Caco-2 (cell line): ENCODE measurements at regions of chr11 and their contacts with region 1.

Region 1: DNA sequence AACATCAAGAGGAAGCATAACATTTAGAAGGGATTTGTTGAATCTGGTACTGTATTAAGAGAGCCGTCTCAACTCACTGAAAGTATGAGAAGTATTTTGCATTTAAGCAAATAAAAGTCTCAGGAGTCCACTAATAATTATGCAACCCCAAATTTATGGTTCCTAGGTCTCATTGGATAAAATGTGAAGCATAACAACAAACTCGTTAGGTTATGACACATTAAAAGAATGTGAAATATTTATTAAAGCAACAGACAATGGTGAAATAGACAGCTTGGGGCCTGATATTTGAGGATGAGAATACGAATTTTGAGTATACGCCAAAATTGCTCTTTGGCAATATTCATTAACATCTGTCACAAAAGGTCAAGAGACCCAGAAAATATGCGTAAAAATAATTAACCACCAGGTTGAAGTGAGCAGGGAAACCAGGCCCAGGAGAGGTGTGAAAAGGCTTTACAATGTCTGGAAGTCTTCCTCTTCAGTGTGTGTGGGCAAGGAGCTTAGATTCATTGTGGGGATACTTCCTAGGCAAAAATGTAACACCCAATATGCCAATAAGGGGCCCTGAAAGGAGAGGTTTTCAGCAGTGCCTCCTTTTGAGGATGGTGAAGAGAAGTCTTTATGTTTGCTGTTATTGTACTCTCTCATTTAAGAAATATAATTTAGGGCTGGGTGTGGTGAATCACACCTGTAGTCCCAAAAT is 89.2 kb downstream of the FDX1 start:
- DNase-seq: no peak
- H3K4me3 ChIP-seq: no peak overlapping the region
- H3K4me3 Mint-ChIP-seq: no peak overlapping the region
- H3K27ac Mint-ChIP-seq: no peak overlapping the region
- H3K4me1 ChIP-seq: no peaks in the 10 kb centered on the region
- H3K4me1 Mint-ChIP-seq: no peaks in the 10 kb centered on the region
- H3K27me3 ChIP-seq: no peaks in the 10 kb centered on the region
- H3K27me3 Mint-ChIP-seq: peaks cover 11% of the 10 kb centered on the region
- CTCF ChIP-seq: no peak

Region 2: DNA sequence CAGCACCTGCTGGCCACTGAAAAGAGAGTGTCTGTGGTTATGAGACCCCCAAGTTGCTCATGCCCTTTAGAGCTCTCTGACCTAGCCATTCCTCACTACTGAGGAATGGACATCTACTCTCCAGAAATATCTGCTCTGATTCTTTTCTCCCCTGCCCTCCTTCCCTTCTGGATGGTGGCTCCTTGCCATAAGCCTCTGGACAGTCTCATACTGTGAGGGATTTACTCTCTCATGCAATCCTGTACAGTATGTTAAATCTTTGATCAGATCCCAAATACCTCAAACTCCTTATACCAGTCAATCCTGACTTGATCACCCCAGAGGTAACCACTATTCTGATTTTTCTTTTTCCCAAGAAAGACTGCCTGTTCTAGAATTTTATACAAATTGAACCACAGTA is 112.6 kb after region 1 on chr11:
- CTCF ChIA-PET with region 1: no interaction called
- POLR2A ChIA-PET with region 1: no interaction called
- intact Hi-C with region 1: loop called (anchors 5 kb)
- DNase-seq: no peak
- H3K4me3 ChIP-seq: no peak overlapping the region
- H3K4me3 Mint-ChIP-seq: no peak overlapping the region
- H3K27ac Mint-ChIP-seq: no peak overlapping the region
- H3K4me1 ChIP-seq: no peaks in the 10 kb centered on the region
- H3K4me1 Mint-ChIP-seq: no peaks in the 10 kb centered on the region
- H3K27me3 ChIP-seq: no peaks in the 10 kb centered on the region
- H3K27me3 Mint-ChIP-seq: peaks cover 9% of the 10 kb centered on the region
- CTCF ChIP-seq: no peak

Region 3: DNA sequence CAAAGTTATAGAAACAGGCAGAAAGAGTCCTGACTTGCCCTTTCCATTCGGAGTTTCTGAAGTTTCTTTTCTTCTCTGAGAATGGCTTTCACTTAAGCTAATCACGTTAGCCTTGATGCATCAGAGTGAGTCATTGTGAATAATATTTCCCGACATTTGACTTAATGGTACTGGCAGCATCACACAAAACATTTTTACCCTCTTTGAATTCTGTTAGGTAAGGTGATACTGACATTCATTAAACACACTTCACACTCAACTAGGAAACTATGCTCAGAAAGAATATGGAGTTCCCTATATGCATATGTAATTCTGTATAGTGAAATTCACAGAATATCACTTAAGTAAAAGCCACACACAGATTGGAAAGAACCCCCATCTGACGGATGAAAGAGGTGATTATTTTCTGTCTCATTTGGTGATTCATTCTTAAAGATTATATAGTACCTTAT is 314.1 kb after region 1 on chr11:
- CTCF ChIA-PET with region 1: no interaction called
- POLR2A ChIA-PET with region 1: no interaction called
- intact Hi-C with region 1: no loop called
- DNase-seq: no peak
- H3K4me3 ChIP-seq: no peak overlapping the region
- H3K4me3 Mint-ChIP-seq: no peak overlapping the region
- H3K27ac Mint-ChIP-seq: no peak overlapping the region
- H3K4me1 ChIP-seq: no peaks in the 10 kb centered on the region
- H3K4me1 Mint-ChIP-seq: no peaks in the 10 kb centered on the region
- H3K27me3 ChIP-seq: no peaks in the 10 kb centered on the region; the same call in 1 of the 2 replicates
- H3K27me3 Mint-ChIP-seq: peaks cover 46% of the 10 kb centered on the region
- CTCF ChIP-seq: no peak